ENCODE measurements at regions of chr15 and their contacts with region 1.

Region 1: DNA sequence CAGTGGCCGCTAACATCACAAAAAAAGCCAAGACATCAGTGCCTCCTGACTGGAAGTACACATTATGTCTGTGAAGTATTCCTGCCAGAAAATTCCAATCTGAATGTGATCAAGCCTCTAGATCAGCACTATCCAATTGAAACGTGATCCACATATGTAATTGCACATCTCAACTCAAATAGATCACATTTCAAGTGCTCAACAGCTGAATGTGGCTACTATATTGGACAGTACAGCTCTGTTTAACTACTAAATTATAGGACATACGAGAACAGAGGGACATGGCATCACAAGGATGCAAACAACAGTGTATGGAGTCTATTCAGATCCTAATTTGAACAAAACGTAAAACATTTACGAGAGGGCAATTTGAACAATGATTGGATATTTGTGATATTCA is 542 bp upstream of the UBAP1L start:
- DNase-seq: no peak
- ATAC-seq: no peak
- H3K4me3 ChIP-seq: no peak overlapping the region
- H3K4me3 Mint-ChIP-seq: no peak overlapping the region
- H3K27ac ChIP-seq: no peak overlapping the region
- H3K27ac Mint-ChIP-seq: no peak overlapping the region
- H3K4me1 ChIP-seq: no peaks in the 10 kb centered on the region
- H3K4me1 Mint-ChIP-seq: no peaks in the 10 kb centered on the region
- H3K27me3 ChIP-seq: no peaks in the 10 kb centered on the region
- H3K27me3 Mint-ChIP-seq: no peaks in the 10 kb centered on the region

Region 2: DNA sequence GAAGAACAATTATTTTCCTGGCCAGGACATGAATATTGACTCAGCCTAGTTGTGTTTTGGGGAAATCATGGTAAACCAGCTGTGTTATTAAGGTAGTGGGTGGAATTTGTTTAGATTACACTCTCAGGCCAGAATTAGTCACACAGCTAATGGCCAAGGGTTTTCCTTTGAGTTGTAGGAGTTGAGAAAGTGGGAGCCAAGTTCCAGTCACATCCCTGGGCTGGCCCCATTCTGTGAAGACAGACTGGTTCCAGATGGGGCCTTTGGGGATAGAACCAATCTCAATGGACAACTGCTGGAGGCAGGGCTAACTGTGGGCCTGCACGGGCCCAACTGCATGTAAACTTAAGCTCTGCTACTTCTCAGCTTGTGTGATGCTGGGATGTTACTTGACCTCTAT is 46.4 kb before region 1 on chr15:
- CTCF ChIA-PET with region 1: no interaction called
- POLR2A ChIA-PET with region 1: no interaction called
- DNase-seq: no peak
- ATAC-seq: no peak
- H3K4me3 ChIP-seq: no peak overlapping the region
- H3K4me3 Mint-ChIP-seq: no peak overlapping the region
- H3K27ac ChIP-seq: no peak overlapping the region
- H3K27ac Mint-ChIP-seq: no peak overlapping the region
- H3K4me1 ChIP-seq: peaks cover 0 to 9% of the 10 kb centered on the region in 2 experiments
- H3K4me1 Mint-ChIP-seq: peaks cover 8 to 11% (median 10%) of the 10 kb centered on the region in 3 donors
- H3K27me3 ChIP-seq: peaks cover 5 to 42% of the 10 kb centered on the region in 2 experiments
- H3K27me3 Mint-ChIP-seq: peaks cover 28 to 46% of the 10 kb centered on the region in 2 donors

Region 3: GRCh38 chr15:65156692-65157091 is 41.1 kb after region 1 on chr15:
- CTCF ChIA-PET with region 1: interaction called in 1 of 2 experiments, 14 read pairs
- POLR2A ChIA-PET with region 1: no interaction called
- DNase-seq: no peak
- ATAC-seq: no peak
- H3K4me3 ChIP-seq: no peak overlapping the region
- H3K4me3 Mint-ChIP-seq: no peak overlapping the region
- H3K27ac ChIP-seq: no peak overlapping the region
- H3K27ac Mint-ChIP-seq: no peak overlapping the region
- H3K4me1 ChIP-seq: no peaks in the 10 kb centered on the region
- H3K4me1 Mint-ChIP-seq: peaks cover 3 to 6% (median 5%) of the 10 kb centered on the region in 3 donors
- H3K27me3 ChIP-seq: no peaks in the 10 kb centered on the region
- H3K27me3 Mint-ChIP-seq: no peaks in the 10 kb centered on the region

Region 4: GRCh38 chr15:65249641-65250040 is 134.1 kb after region 1 on chr15:
- CTCF ChIA-PET with region 1: no interaction called
- POLR2A ChIA-PET with region 1: no interaction called
- DNase-seq: peak in 10 of 35 experiments; percentile 1 to 45 (median 8)
- ATAC-seq: peak in 2 of 4 experiments; percentile 27 to 74
- H3K4me3 ChIP-seq: no peak overlapping the region
- H3K4me3 Mint-ChIP-seq: no peak overlapping the region
- H3K27ac ChIP-seq: no peak overlapping the region
- H3K27ac Mint-ChIP-seq: no peak overlapping the region
- H3K4me1 ChIP-seq: peaks cover 0 to 4% of the 10 kb centered on the region in 2 experiments
- H3K4me1 Mint-ChIP-seq: peaks cover 2 to 7% (median 6%) of the 10 kb centered on the region in 3 donors
- H3K27me3 ChIP-seq: no peaks in the 10 kb centered on the region
- H3K27me3 Mint-ChIP-seq: no peaks in the 10 kb centered on the region